Psoas muscle (tissue), 8 donors: ENCODE measurements at regions of chr2 and their contacts with region 1.

Region 1: DNA sequence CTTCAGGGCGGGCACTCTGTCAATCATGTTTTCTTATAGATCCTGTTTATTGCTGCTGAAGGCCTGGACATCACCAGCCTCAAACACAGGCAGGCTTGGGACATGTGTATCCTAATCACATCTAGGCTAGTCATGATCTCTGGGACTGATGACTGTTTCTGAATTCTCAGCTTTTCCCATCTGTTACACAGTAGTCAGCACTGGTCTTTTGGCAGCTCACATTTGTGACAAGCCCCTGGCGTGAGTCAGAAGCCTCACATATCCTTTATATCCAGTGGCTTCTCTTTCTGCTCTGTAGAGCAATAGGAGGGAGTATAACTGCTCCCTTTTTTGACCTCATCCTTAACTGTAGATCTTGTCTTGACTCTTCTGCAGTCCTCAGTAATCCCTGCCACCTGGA is 4.5 kb downstream of the SEMA4F start:
- DNase-seq: no peak
- ATAC-seq: no peak
- H3K4me3 ChIP-seq: no peak overlapping the region
- H3K27ac ChIP-seq: no peak overlapping the region
- H3K4me1 ChIP-seq: peaks cover 5% of the 10 kb centered on the region
- H3K27me3 ChIP-seq: no peaks in the 10 kb centered on the region
- CTCF ChIP-seq: no peak

Region 2: GRCh38 chr2:74617122-74617521 is 41.4 kb before region 1 on chr2:
- intact Hi-C with region 1: no loop called
- DNase-seq: no peak
- ATAC-seq: no peak
- H3K4me3 ChIP-seq: no peak overlapping the region
- H3K27ac ChIP-seq: no peak overlapping the region
- H3K4me1 ChIP-seq: no peaks in the 10 kb centered on the region
- H3K27me3 ChIP-seq: peaks cover 0 to 24% (median 3%) of the 10 kb centered on the region in 3 donors
- CTCF ChIP-seq: no peak

Region 3: GRCh38 chr2:76491503-76491902 is 1833.0 kb after region 1 on chr2:
- intact Hi-C with region 1: loop called in 1 of 2 experiments (anchors 5 kb)
- DNase-seq: no peak
- ATAC-seq: no peak
- H3K4me3 ChIP-seq: no peak overlapping the region
- H3K27ac ChIP-seq: no peak overlapping the region
- H3K4me1 ChIP-seq: no peaks in the 10 kb centered on the region
- H3K27me3 ChIP-seq: no peaks in the 10 kb centered on the region
- CTCF ChIP-seq: no peak